Activated naive CD4-positive, alpha-beta T cell treated with anti-CD3 and anti-CD28 coated beads for 36 hours (primary cell): ENCODE measurements at regions of chr2 and their contacts with region 1.

Region 1: GRCh38 chr2:101781326-101781725 is 83.8 kb downstream of the MAP4K4 start:
- DNase-seq: no peak
- H3K4me3 Mint-ChIP-seq: peak overlapping the region; percentile 38
- H3K27ac Mint-ChIP-seq: peak overlapping the region; percentile 26
- H3K4me1 Mint-ChIP-seq: peaks cover 82% of the 10 kb centered on the region
- H3K27me3 Mint-ChIP-seq: no peaks in the 10 kb centered on the region

Region 2: DNA sequence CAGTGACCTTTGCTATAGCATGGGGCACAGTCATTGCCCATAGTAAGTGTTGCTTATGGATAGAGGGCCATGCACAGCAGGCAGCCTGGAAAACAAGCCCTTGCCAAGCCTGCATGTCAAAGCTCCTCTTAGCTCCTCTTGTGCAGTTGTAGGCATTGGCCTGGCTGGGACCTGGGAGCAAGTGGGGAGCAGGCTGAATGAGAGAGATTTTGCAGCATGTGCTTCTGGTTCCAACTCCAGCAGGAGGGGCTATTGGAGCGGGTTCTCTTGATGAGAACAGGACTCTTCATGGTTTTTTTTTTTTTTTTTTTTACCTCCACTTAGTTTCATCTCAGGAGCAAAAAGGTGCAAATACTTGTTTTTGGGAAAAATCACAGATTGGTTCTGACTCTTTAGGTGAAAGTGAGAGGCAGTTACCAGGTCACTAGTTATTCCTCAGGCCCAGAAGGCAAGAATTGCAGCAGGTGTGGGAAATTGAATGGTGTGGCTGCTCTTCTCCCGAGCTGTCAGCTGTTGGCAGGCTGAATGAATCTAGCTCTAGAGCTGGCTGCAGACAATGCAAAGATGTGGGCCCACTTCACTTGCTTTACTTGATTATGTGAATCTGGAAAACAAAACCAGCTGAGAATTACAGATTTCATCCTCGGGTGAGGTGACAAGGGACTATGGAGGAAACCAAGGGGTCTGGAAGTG is 12.1 kb after region 1 on chr2:
- CTCF ChIA-PET with region 1: interaction called, 6 read pairs
- intact Hi-C with region 1: loop called (anchors 2 kb)
- DNase-seq: no peak
- H3K4me3 Mint-ChIP-seq: no peak overlapping the region
- H3K27ac Mint-ChIP-seq: no peak overlapping the region
- H3K4me1 Mint-ChIP-seq: peaks cover 67% of the 10 kb centered on the region
- H3K27me3 Mint-ChIP-seq: no peaks in the 10 kb centered on the region